Activated CD8-positive, alpha-beta T cell treated with anti-CD3 and anti-CD28 coated beads for 36 hours (primary cell): ENCODE measurements at regions of chr2 and their contacts with region 1.

Region 1: GRCh38 chr2:85741833-85742455 is 11.8 kb upstream of the ATOH8 start:
- DNase-seq: no peak
- ATAC-seq: no peak
- H3K4me3 Mint-ChIP-seq: no peak overlapping the region
- H3K27ac Mint-ChIP-seq: no peak overlapping the region
- H3K4me1 Mint-ChIP-seq: no peaks in the 10 kb centered on the region
- H3K27me3 Mint-ChIP-seq: peaks cover 29% of the 10 kb centered on the region
- CTCF ChIP-seq: no peak

Region 2: GRCh38 chr2:85728883-85729824 is 12.8 kb before region 1 on chr2:
- CTCF ChIA-PET with region 1: interaction called, 32 read pairs
- POLR2A ChIA-PET with region 1: no interaction called
- intact Hi-C with region 1: no loop called
- DNase-seq: peak; percentile 82
- ATAC-seq: peak; percentile 96
- H3K4me3 Mint-ChIP-seq: no peak overlapping the region
- H3K27ac Mint-ChIP-seq: no peak overlapping the region
- H3K4me1 Mint-ChIP-seq: no peaks in the 10 kb centered on the region
- H3K27me3 Mint-ChIP-seq: peaks cover 7% of the 10 kb centered on the region
- CTCF ChIP-seq: peak; percentile 87